ENCODE measurements at regions of chr5 and their contacts with region 1.

Region 1: DNA sequence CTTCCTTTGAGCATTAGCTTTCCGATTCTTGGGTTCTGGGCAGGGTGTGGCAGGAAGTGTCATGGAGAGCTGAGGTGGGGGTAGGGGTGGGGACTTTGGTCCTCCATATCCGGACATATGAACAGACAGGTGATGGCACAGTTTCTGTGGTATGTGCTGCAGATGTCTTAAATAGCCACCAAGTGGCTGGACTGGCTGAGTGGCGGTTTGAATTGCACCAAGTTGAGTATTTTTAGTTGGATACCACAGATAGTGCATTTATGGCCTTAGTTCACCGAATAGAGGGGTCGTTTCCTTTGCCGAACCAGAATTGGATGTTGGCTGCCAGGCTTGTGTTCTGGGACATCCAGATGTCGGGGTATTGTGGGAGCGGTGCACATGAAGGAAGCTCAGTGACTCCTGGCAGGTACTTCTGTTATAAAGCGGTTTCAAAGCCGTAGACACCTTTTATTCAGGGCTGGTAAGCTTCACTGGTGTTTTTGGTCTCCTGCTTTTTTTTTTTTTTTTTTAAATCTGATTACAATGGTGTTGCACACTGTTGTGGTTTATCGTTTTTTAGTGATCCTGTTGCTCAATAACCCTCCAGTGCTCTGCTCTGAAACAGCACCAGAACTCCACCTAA is 15.1 kb upstream of the TNFAIP8 start:
- DNase-seq: peak; percentile 90
- H3K4me3 Mint-ChIP-seq: peak overlapping the region; percentile 82
- H3K27ac Mint-ChIP-seq: peak overlapping the region; percentile 92
- H3K4me1 Mint-ChIP-seq: peaks cover 82% of the 10 kb centered on the region
- H3K27me3 Mint-ChIP-seq: no peaks in the 10 kb centered on the region

Region 2: DNA sequence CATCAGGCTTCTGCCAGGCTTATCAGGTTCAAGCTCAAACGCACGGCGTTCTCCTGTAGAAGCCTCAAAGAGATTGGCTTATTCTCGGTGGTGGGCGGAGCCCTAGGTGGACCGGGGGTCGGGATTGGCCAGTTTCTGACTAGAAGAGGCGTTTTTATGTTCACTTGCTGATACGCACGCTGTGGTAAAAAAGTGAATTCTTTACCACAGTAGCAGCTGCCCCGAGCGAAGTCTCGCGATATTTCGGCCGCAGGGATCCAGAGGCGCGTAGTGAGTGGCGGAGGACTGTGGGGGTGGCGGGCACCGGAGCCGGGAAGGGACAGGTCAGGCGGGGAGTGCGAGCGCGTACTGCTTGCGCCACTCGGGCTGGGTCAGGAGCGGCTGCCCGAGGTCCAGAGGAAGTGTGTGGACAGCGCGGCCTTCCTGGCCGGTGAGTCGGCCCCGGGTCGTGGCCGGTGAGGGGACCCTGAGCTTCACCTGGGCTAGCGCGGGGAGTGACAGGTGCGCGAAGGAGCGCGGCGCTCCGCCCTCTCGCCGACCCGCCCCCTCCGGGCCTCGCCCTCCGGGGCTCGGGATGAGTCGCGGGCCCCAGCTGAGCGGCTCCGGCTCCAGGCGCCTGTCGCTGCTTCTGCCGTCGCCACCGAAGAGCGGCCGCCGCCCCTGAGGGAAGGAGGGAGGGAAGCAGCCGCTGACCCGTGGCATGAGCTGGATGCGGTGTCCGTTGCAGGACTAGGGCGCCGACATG is 269.7 kb before region 1 on chr5 and contains the start of gene DMXL1:
- intact Hi-C with region 1: loop called (anchors 1 kb)
- DNase-seq: peak; percentile 99
- H3K4me3 Mint-ChIP-seq: peak within 1 kb of the TSS; percentile 94
- H3K27ac Mint-ChIP-seq: peak within 1 kb of the TSS; percentile 95
- H3K4me1 Mint-ChIP-seq: peaks cover 30% of the 10 kb centered on the region
- H3K27me3 Mint-ChIP-seq: no peaks in the 10 kb centered on the region
- total RNA-seq, gene DMXL1: 22.4 and 25.6 TPM in 2 replicates

Region 3: GRCh38 chr5:119274767-119275130 is 66.0 kb before region 1 on chr5:
- intact Hi-C with region 1: loop called (anchors 1 kb)
- DNase-seq: peak; percentile 78
- H3K4me3 Mint-ChIP-seq: peak overlapping the region; percentile 95
- H3K27ac Mint-ChIP-seq: peak overlapping the region; percentile 95
- H3K4me1 Mint-ChIP-seq: peaks cover 89% of the 10 kb centered on the region
- H3K27me3 Mint-ChIP-seq: no peaks in the 10 kb centered on the region

Region 4: GRCh38 chr5:119328753-119329602 is 11.7 kb before region 1 on chr5:
- intact Hi-C with region 1: loop called (anchors 1 kb)
- DNase-seq: peak; percentile 86
- H3K4me3 Mint-ChIP-seq: peak overlapping the region; percentile 73
- H3K27ac Mint-ChIP-seq: peak overlapping the region; percentile 92
- H3K4me1 Mint-ChIP-seq: peaks cover 74% of the 10 kb centered on the region
- H3K27me3 Mint-ChIP-seq: no peaks in the 10 kb centered on the region

Region 5: DNA sequence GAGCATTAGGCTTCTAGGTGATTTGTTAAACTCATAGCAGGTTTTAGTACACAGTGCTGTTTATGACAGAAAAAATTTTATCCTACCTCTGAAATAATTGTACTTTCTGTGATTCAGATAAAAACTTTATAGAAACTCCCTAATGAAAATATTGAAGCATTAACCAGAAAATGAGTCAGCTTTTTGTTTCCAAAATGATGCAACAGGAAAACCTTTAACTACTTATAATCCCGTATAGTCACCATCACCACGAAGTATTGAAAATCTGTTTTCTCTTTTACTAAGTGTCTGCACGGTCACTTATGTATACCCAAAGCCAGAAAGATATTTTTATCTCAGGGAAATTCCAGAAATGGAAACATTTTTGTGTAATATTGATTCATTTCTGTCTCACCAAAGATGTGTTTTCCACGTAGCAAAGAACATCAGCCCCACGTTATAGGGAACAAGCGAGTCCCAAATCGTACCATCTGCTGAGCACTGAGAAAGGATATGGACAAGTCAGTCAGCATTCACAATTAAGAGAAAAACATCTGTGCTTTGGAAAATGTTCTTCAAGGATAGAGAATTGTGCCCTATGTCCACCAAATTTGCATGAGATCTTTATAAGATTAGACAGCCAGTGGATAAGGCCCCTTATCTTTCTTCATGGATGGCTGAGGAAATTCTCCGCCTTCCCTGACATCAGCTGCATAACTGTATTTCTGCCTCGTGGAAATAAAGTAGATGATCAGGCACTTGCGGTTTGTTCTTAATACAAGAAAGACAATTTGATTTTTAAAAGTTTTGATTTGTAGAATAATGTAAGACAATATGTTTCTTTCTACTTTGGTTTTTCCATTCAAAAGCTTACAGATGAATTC is 57.0 kb after region 1 on chr5:
- intact Hi-C with region 1: loop called (anchors 1 kb)
- DNase-seq: no peak
- H3K4me3 Mint-ChIP-seq: peak overlapping the region; percentile 11
- H3K27ac Mint-ChIP-seq: peak overlapping the region; percentile 83
- H3K4me1 Mint-ChIP-seq: peaks cover 61% of the 10 kb centered on the region
- H3K27me3 Mint-ChIP-seq: no peaks in the 10 kb centered on the region

Region 6: GRCh38 chr5:120134944-120135343 is 794.2 kb after region 1 on chr5:
- intact Hi-C with region 1: no loop called
- DNase-seq: no peak
- H3K4me3 Mint-ChIP-seq: no peak overlapping the region
- H3K27ac Mint-ChIP-seq: no peak overlapping the region
- H3K4me1 Mint-ChIP-seq: no peaks in the 10 kb centered on the region
- H3K27me3 Mint-ChIP-seq: no peaks in the 10 kb centered on the region